Heart left ventricle (tissue), 16 donors: ENCODE measurements at regions of chr10 and their contacts with region 1.

Region 1: GRCh38 chr10:101385866-101386658 is 32.1 kb downstream of the BTRC start:
- DNase-seq: no peak
- ATAC-seq: peak; percentile 61 to 84 (median 76)
- H3K4me3 ChIP-seq: no peak overlapping the region
- H3K27ac ChIP-seq: peak overlapping the region in 9 of 12 donors; percentile 6 to 61 (median 38)
- H3K4me1 ChIP-seq: peaks cover 0 to 28% (median 10%) of the 10 kb centered on the region in 12 donors
- H3K27me3 ChIP-seq: no peaks in the 10 kb centered on the region
- CTCF ChIP-seq: no peak
- POLR2A ChIP-seq: no peak

Region 2: GRCh38 chr10:101373063-101373462 is 13.0 kb before region 1 on chr10:
- intact Hi-C with region 1: no loop called
- DNase-seq: no peak
- ATAC-seq: no peak
- H3K4me3 ChIP-seq: no peak overlapping the region
- H3K27ac ChIP-seq: no peak overlapping the region
- H3K4me1 ChIP-seq: peaks cover 0 to 10% (median 1%) of the 10 kb centered on the region in 12 donors
- H3K27me3 ChIP-seq: no peaks in the 10 kb centered on the region
- CTCF ChIP-seq: no peak
- POLR2A ChIP-seq: no peak

Region 3: DNA sequence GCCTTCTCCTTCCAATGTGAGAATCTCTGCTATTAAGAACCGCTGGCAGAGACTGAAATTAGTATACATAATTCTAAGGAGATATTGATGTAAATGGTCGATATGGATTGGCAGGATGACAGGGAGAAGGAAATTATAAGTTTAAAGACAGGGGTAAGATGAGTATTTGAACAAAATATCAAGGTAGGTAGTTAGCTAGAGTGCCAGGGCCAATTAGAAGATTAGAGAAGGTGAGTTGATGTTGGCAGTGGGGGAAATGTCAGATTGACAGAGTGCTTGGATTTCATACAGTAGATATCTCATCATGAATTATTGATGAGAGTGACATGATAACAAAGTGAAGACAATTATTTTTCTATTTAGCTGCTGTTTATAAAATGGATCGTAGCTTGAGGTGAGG is 42.0 kb after region 1 on chr10:
- intact Hi-C with region 1: no loop called
- DNase-seq: no peak
- ATAC-seq: no peak
- H3K4me3 ChIP-seq: no peak overlapping the region
- H3K27ac ChIP-seq: no peak overlapping the region
- H3K4me1 ChIP-seq: peaks cover 0 to 8% (median 0%) of the 10 kb centered on the region in 12 donors
- H3K27me3 ChIP-seq: no peaks in the 10 kb centered on the region
- CTCF ChIP-seq: no peak
- POLR2A ChIP-seq: no peak

Region 4: GRCh38 chr10:101438881-101439391 is 52.9 kb after region 1 on chr10:
- intact Hi-C with region 1: no loop called
- DNase-seq: no peak
- ATAC-seq: no peak
- H3K4me3 ChIP-seq: no peak overlapping the region
- H3K27ac ChIP-seq: no peak overlapping the region
- H3K4me1 ChIP-seq: peaks cover 0 to 12% (median 0%) of the 10 kb centered on the region in 12 donors
- H3K27me3 ChIP-seq: no peaks in the 10 kb centered on the region
- CTCF ChIP-seq: no peak
- POLR2A ChIP-seq: no peak

Region 5: GRCh38 chr10:101458869-101459268 is 72.8 kb after region 1 on chr10:
- intact Hi-C with region 1: loop called in 1 of 10 experiments (anchors 5 kb)
- DNase-seq: no peak
- ATAC-seq: peak in 2 of 4 donors; percentile 57 to 74
- H3K4me3 ChIP-seq: no peak overlapping the region
- H3K27ac ChIP-seq: no peak overlapping the region
- H3K4me1 ChIP-seq: peaks cover 0 to 23% (median 1%) of the 10 kb centered on the region in 12 donors
- H3K27me3 ChIP-seq: no peaks in the 10 kb centered on the region
- CTCF ChIP-seq: no peak
- POLR2A ChIP-seq: no peak